Motor neuron (in vitro differentiated cells): ENCODE measurements at regions of chr10 and their contacts with region 1.

Region 1: DNA sequence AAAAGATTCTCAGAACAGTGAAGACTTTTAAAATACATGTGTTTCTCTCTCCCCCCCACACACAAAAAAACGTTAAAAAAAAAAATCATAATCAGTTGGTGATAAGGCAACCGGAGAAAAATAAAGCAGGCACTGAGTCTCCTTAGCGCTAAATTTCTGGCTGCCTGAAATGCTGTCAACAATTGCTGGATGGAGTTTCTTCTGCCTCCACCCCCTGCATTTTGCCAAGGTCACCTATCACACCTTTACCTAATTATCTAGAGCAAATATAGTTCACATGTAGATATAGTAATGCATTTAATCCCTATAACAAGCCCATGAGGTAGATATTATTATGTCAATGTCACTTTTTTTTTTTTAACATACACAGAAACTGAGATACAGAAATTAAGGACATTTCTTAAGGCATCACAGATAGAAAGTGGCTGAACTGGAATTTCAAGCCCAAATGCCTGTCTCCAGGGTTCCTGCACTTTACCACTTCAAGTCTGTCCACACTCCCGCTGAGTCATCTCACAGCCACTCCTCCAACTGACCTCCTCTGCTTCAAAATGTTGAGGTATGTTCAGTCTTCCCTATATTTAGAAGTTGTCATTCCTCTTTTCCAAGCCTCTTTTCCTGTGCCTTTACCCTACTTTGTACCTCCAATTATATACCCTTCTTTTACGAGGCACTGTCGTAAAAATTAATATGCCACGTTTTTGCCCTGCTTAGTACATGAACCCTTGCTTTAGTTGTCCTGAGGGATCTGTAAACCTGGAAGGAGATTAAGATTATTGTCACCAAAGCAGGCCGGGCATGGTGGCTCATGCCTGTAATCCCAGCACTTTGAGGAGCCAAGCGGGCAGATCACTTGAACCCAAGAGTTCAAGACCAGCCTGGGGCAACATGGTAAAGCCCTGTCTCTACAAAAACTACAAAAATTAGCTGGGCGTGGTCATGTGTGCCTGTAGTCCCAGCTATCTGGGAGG is 72.8 kb upstream of the MPP7 start:
- ATAC-seq: peak in 1 of 8 experiments; percentile 34
- H3K4me3 ChIP-seq: no peak overlapping the region
- H3K27ac ChIP-seq: no peak overlapping the region
- H3K4me1 ChIP-seq: no peaks in the 10 kb centered on the region

Region 2: DNA sequence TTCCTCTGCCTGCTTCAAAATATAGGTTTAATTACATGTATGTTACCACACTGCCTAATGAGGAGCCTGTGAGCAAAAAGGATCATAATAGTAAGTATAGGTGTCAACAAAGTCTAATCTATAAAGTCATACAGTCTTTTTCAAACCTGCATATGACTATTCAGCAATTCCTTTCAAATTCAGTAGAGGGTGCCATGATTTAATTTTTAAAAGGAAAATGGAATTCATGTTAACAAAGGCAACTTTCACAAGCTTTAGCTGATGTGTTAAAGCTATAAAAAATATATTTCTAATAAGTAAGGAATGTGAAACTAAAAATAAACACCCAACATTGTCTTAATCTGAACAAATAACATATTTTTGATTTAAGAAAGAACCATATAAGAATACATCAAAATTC is 124.9 kb before region 1 on chr10:
- in situ Hi-C with region 1: loop called in 4 of 9 experiments (anchors 10 to 25 kb)
- ATAC-seq: peak in 3 of 8 experiments; percentile 28 to 35 (median 33)
- H3K4me3 ChIP-seq: no peak overlapping the region
- H3K27ac ChIP-seq: no peak overlapping the region
- H3K4me1 ChIP-seq: peaks cover 0 to 7% of the 10 kb centered on the region in 2 donors

Region 3: DNA sequence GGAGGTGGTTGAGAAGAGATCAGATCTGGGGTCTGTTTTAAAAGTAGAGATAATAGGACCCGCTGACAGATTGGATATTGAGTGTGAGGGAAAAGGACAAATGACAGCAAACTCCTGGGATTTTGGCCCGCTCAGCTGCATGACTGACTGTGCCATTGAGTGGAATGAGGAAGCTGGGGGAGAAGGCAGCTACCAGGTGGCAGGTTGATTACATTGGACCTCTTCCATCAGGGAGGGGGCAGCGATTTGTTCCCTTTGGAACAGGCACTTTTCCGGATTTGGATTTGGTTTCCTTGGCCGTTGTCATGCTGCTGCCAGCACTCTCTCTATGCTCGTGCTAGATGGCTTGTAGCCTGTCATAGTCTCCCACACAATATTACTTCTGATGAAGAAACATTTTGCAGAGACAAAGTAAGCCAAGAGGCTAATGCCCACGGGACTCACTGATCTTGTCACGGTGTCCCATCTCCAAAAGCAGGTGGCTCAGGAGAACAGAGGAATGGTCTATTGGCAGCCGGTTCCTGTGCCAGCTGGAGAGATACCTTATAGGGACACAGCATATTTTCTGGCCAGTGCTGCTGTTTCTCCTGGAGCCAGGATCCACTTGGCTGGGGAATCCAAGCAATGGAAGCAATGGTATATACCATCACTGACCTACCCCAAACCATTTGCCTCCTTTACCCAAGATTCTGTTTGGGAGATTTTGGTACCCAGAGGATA is 88.2 kb after region 1 on chr10:
- in situ Hi-C with region 1: no loop called
- ATAC-seq: no peak
- H3K4me3 ChIP-seq: no peak overlapping the region
- H3K27ac ChIP-seq: no peak overlapping the region
- H3K4me1 ChIP-seq: no peaks in the 10 kb centered on the region